PC-9 (cell line): ENCODE measurements at regions of chr17 and their contacts with region 1.

Region 1: GRCh38 chr17:19327039-19327776 is 35.3 kb downstream of the B9D1 start:
- DNase-seq: peak; percentile 75 to 86
- H3K4me3 ChIP-seq: no peak overlapping the region
- H3K27ac ChIP-seq: peak overlapping the region; percentile 49
- H3K4me1 ChIP-seq: peaks cover 17% of the 10 kb centered on the region
- H3K27me3 ChIP-seq: no peaks in the 10 kb centered on the region
- CTCF ChIP-seq: no peak

Region 2: GRCh38 chr17:19309701-19310100 is 17.5 kb before region 1 on chr17:
- CTCF ChIA-PET with region 1: interaction called, 3 read pairs
- POLR2A ChIA-PET with region 1: interaction called, 3 read pairs
- intact Hi-C with region 1: loop called (anchors 1 kb)
- DNase-seq: peak in 1 of 2 experiments; percentile 89
- H3K4me3 ChIP-seq: no peak overlapping the region
- H3K27ac ChIP-seq: no peak overlapping the region
- H3K4me1 ChIP-seq: 0 out of 2 replicates have a peak, but pooled peaks cover 5% of the 10 kb centered on the region
- H3K27me3 ChIP-seq: no peaks in the 10 kb centered on the region
- CTCF ChIP-seq: no peak

Region 3: DNA sequence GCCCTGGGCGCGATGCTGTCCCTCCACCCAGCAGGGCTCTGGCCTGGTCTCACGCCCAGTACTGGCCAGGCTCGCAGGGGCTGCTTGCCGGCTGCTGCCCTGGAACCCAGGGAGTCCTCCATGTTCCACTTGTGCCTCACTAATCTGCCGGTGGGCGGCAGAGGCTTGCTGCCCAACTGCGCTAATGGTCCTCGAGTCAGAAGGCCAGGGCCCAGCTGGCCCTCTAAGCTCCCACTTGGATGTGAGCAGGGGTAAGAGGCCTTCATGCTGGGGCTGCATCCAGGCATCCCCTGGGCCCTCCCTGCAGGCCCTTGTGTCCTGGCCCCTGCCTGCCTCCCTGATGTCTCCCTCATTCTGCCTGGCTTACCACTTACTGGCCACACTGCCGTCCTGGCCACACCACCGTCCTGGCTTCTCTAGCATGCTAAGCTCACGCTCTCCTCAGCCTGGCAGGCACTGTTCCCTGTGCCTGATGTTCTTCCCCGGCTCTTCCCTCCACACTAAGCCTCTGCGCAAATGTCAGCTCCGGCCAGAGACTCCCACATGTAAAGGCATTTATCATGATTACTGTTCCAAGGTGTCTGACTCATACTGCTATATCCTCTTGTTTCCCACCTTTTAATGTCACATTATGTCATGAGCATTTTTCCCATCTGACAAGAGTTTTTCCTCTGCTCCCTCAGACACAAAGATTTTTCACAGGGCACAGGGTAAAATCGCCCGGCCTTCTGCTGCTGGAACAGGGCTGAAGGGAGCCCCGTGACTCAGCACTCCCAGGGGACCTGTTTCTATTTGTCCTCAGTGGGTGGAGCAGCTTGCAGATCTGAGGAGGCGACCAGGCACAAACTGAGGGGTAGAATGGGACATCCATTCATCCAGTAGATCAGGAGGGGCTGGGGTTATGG is 19.4 kb after region 1 on chr17:
- CTCF ChIA-PET with region 1: no interaction called
- POLR2A ChIA-PET with region 1: no interaction called
- intact Hi-C with region 1: loop called (anchors 1 kb)
- DNase-seq: peak; percentile 53 to 73
- H3K4me3 ChIP-seq: no peak overlapping the region
- H3K27ac ChIP-seq: peak overlapping the region; percentile 57
- H3K4me1 ChIP-seq: peaks cover 27% of the 10 kb centered on the region
- H3K27me3 ChIP-seq: no peaks in the 10 kb centered on the region
- CTCF ChIP-seq: no peak

Region 4: GRCh38 chr17:19387921-19388521 is 60.8 kb after region 1 on chr17:
- CTCF ChIA-PET with region 1: no interaction called
- POLR2A ChIA-PET with region 1: no interaction called
- intact Hi-C with region 1: no loop called
- DNase-seq: peak; percentile 79 to 92
- H3K4me3 ChIP-seq: no peak overlapping the region
- H3K27ac ChIP-seq: 0 out of 2 replicates have a peak overlapping the region, but pooled peaks have one; percentile 3
- H3K4me1 ChIP-seq: peaks cover 15% of the 10 kb centered on the region
- H3K27me3 ChIP-seq: no peaks in the 10 kb centered on the region
- CTCF ChIP-seq: no peak